ENCODE measurements at regions of chr7 and their contacts with region 1.

Region 1: GRCh38 chr7:151782598-151783448 is 94.1 kb downstream of the PRKAG2 start:
- DNase-seq: no peak
- H3K4me3 ChIP-seq: peak overlapping the region; percentile 21; the same call in 1 of the 2 replicates
- H3K27me3 ChIP-seq: peaks cover 14% of the 10 kb centered on the region
- CTCF ChIP-seq: peak; percentile 89

Region 2: GRCh38 chr7:151304856-151305255 is 478.0 kb before region 1 on chr7:
- CTCF ChIA-PET with region 1: no interaction called
- POLR2A ChIA-PET with region 1: interaction called, 12 read pairs
- DNase-seq: no peak
- H3K4me3 ChIP-seq: peak overlapping the region; percentile 7; the same call in 1 of the 2 replicates
- H3K27me3 ChIP-seq: peaks cover 6% of the 10 kb centered on the region
- CTCF ChIP-seq: no peak

Region 3: DNA sequence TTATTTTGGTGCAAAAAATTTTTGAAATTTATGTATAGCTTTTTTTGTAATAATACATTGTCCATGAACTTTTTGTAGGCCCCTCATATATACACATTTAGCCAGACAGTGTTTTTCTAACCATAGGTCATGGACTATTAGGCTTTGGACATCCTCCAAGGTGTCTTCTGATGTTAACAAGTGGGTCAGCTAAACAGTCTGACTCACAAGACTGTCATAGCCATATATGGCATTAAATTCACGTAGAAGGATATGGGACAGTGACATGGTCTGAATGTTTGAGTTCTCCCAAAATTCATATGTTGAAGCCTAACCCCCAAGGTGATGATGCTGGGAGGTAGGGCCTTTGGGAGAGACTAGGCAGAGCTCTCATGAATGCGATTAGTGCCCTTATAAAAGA is 455.2 kb before region 1 on chr7:
- CTCF ChIA-PET with region 1: no interaction called
- POLR2A ChIA-PET with region 1: no interaction called
- DNase-seq: no peak
- H3K4me3 ChIP-seq: no peak overlapping the region
- H3K27me3 ChIP-seq: no peaks in the 10 kb centered on the region; the same call in 1 of the 2 replicates
- CTCF ChIP-seq: no peak

Region 4: DNA sequence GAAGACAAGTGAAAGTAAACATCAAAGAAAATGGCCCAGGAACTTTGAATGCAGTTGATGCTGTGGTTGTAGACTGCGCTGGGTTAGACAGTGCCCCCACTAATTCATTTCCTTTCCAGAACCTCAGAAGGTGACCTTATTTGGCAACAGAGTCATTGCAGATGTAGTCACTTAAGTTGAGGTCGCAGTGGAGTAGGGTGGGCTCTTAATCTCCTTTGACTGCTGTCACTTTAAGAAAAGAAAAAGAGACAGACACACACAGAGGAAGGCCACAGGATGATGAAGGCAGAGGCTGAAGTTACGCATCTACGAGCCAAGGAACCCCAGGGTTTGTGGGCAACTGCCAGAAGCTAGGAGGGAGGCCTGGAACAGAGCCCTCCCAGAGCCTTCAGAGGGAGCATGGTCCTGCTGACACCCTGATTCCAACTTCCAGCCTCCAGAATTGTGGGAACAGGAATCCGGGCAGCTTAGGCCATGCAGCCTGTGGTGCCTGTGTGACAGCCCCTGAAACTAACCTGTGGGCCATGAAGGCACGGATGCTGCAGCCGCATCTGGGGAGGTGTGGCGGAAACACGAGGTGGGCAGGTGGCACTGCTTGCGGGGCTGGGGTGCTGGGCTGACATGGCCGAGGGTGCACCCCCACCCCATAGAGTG is 13.5 kb before region 1 on chr7:
- CTCF ChIA-PET with region 1: interaction called, 14 read pairs
- POLR2A ChIA-PET with region 1: no interaction called
- DNase-seq: no peak
- H3K4me3 ChIP-seq: no peak overlapping the region
- H3K27me3 ChIP-seq: peaks cover 19% of the 10 kb centered on the region
- CTCF ChIP-seq: no peak

Region 5: DNA sequence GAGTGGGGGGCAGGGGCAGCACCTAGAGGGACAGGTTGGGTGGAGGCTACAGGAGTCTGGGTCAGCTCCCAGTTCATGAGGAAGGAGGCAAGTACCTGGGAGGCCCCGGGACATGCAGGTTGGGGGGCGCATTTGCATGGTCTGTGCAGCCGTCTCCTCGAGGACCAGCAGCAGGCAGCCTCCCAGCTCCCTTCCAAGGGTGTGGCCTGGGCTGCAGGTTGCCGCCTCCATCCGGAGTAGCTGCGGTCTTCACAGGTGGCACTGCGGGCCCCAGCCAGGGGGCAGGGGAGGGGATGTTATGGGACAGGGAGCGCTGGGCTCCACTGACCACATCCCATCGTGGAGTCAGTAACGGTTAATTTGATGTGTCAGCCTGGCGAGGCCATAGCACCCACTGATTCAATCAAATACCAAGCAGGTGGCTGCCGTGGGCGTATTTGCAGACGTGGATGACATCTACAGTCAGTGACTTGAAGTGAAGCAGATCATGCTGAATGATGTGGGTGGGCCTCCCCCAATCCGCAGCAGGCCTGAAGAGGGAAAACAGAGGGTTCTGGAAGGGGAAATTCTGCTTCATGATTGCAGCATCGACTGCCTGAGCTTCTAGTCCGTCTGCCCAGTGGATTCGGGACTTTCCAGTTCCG is 12.5 kb after region 1 on chr7:
- CTCF ChIA-PET with region 1: interaction called, 44 read pairs
- POLR2A ChIA-PET with region 1: no interaction called
- DNase-seq: no peak
- H3K4me3 ChIP-seq: no peak overlapping the region
- H3K27me3 ChIP-seq: no peaks in the 10 kb centered on the region
- CTCF ChIP-seq: no peak

Region 6: DNA sequence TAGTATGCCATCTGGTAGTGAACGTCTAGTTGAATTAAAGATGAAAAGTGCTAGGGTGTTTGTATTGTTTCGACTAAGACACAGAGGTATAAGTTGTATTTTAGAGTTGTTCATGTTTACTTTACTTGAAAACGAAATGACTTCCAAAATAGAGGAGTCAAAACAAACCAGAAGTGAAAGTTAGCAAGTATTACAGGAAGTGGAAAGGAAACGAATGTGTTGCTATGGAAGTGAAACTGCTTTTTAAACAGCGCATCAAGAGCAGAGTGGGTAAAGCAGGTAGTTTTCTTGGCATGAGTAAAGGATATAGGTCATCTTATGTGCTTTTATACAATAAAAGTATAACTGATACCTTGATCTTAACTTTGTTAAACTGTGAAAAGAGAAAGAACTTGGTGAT is 153.4 kb after region 1 on chr7:
- CTCF ChIA-PET with region 1: interaction called, 16 read pairs
- POLR2A ChIA-PET with region 1: no interaction called
- DNase-seq: no peak
- H3K4me3 ChIP-seq: no peak overlapping the region
- H3K27me3 ChIP-seq: peaks cover 5% of the 10 kb centered on the region
- CTCF ChIP-seq: no peak

Measured in BJ (cell line).